Tibial artery (tissue), 4 donors: ENCODE measurements at regions of chr4 and their contacts with region 1.

Region 1: GRCh38 chr4:105158837-105159236 is 12.2 kb downstream of the TET2 start:
- DNase-seq: peak in 1 of 2 donors; percentile 27
- H3K4me3 ChIP-seq: no peak overlapping the region
- H3K27ac ChIP-seq: no peak overlapping the region
- H3K4me1 ChIP-seq: peaks cover 0 to 42% (median 0%) of the 10 kb centered on the region in 4 donors
- H3K27me3 ChIP-seq: no peaks in the 10 kb centered on the region
- CTCF ChIP-seq: no peak

Region 2: GRCh38 chr4:105092356-105092755 is 66.5 kb before region 1 on chr4:
- intact Hi-C with region 1: no loop called
- DNase-seq: no peak
- H3K4me3 ChIP-seq: no peak overlapping the region
- H3K27ac ChIP-seq: no peak overlapping the region
- H3K4me1 ChIP-seq: peaks cover 0 to 11% (median 7%) of the 10 kb centered on the region in 4 donors
- H3K27me3 ChIP-seq: no peaks in the 10 kb centered on the region
- CTCF ChIP-seq: no peak

Region 3: GRCh38 chr4:105715692-105716278 is 556.9 kb after region 1 on chr4:
- intact Hi-C with region 1: loop called (anchors 10 kb)
- DNase-seq: no peak
- H3K4me3 ChIP-seq: no peak overlapping the region
- H3K27ac ChIP-seq: no peak overlapping the region
- H3K4me1 ChIP-seq: peaks cover 0 to 6% (median 0%) of the 10 kb centered on the region in 4 donors
- H3K27me3 ChIP-seq: no peaks in the 10 kb centered on the region
- CTCF ChIP-seq: peak; percentile 41